WTC11 (cell line): ENCODE measurements at regions of chr3 and their contacts with region 1.

Region 1: DNA sequence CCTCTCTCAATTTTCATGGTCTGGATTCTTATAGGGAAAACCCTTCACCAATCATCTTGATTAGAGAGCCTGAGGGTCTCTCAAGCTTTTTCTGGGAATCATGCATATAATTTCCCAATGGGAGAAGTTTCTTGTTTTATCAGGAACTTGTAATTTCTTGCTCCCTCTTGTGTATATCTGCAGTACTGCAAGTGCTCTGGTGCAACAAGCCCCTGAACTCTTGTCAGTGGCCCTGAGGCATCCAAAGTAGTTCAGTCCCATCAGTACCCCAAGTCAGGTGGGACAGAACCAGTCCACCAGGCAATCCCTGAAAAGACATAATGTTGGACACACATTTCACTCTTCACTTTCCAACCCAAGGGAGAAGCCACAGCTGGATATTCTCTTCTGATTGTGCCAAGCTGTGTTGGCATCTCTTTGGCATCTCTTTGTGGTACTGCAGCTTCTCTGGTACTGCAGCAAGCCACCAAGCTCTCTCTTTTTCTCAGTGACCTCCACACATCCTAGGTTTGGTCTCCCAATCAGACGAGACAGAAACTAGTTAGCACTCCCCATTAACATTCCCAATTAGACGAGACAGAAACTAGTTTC is 214.5 kb downstream of the ZIC4 start:
- DNase-seq: peak; percentile 46
- ATAC-seq: peak; percentile 90
- H3K4me3 Mint-ChIP-seq: no peak overlapping the region
- H3K27ac Mint-ChIP-seq: no peak overlapping the region
- H3K4me1 Mint-ChIP-seq: no peaks in the 10 kb centered on the region
- H3K27me3 Mint-ChIP-seq: no peaks in the 10 kb centered on the region
- CTCF ChIP-seq: peak; percentile 93

Region 2: GRCh38 chr3:146817704-146818103 is 374.2 kb before region 1 on chr3:
- CTCF ChIA-PET with region 1: interaction called, 10 read pairs
- POLR2A ChIA-PET with region 1: no interaction called
- DNase-seq: no peak
- ATAC-seq: no peak; the same call in 1 of the 2 replicates
- H3K4me3 Mint-ChIP-seq: no peak overlapping the region
- H3K27ac Mint-ChIP-seq: no peak overlapping the region
- H3K4me1 Mint-ChIP-seq: peaks cover 7% of the 10 kb centered on the region; the same call in 1 of the 2 replicates
- H3K27me3 Mint-ChIP-seq: no peaks in the 10 kb centered on the region
- CTCF ChIP-seq: no peak

Region 3: DNA sequence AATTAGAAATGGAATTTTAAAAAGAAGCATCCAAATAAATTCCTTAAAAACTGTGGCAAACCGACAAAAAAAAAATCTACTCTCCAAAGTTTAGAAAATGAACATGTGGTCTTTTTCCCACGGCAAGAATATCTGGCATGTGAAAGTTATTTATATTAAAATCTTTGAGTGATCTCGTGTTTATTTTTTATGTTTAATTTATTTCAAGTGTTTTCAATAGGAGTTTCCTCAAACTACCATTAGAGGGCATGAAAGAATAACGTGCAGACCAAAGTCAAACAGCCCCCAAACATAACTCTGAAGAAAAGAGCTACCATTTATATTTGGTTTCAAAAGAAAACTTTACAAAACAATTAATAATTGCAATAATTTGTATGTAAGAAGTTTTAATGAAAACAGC is 71.9 kb before region 1 on chr3:
- CTCF ChIA-PET with region 1: interaction called, 18 read pairs
- POLR2A ChIA-PET with region 1: no interaction called
- DNase-seq: no peak
- ATAC-seq: no peak
- H3K4me3 Mint-ChIP-seq: no peak overlapping the region
- H3K27ac Mint-ChIP-seq: no peak overlapping the region
- H3K4me1 Mint-ChIP-seq: no peaks in the 10 kb centered on the region
- H3K27me3 Mint-ChIP-seq: no peaks in the 10 kb centered on the region
- CTCF ChIP-seq: no peak